ENCODE measurements at regions of chr7 and their contacts with region 1.

Region 1: DNA sequence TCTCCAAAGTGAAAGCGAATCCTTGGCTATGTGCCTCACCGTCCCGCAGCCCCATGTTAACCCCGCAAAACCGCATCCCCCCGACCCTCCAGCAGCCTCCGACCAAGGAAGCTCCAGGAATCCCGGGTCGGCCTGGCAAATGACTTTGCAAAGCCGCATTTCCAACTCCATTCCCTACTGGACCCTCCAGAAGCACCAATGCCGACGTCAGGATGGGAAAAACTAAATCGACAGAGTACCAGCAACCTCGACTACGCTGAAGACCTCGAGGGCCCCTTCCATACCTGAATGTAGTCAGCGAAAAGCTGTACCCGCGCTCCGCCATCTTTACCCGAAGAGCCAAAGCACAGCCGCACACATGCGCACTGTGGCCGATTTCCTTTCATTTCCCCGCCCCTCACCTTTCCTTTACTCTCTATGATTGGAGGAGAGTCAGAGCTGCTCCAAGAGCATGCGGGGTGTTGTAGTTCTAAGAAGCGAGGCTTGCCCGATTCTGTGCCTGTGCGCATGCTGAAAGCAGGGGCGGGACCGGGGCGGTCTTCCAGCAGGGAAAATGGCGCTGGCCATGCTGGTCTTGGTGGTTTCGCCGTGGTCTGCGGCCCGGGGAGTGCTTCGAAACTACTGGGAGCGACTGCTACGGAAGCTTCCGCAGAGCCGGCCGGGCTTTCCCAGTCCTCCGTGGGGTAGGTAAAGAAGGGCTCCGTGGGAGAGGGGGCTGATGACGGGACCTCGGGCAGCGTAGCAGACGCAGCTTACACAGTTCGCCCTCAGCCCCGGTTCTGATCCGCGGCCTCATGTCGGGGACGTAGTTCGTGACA is at the starts of genes MRPL32 and PSMA2:
- DNase-seq: peak; percentile 88 to 98 (median 91)
- ATAC-seq: peak; percentile 98
- H3K4me3 ChIP-seq: peak within 1 kb of the TSS; percentile 87
- H3K4me3 Mint-ChIP-seq: peak within 1 kb of the TSS; percentile 92
- H3K27ac ChIP-seq: peak within 1 kb of the TSS; percentile 74 to 87
- H3K27ac Mint-ChIP-seq: peak within 1 kb of the TSS; percentile 92
- H3K4me1 ChIP-seq: peaks cover 28% of the 10 kb centered on the region
- H3K4me1 Mint-ChIP-seq: peaks cover 79% of the 10 kb centered on the region
- H3K27me3 ChIP-seq: no peaks in the 10 kb centered on the region
- H3K27me3 Mint-ChIP-seq: no peaks in the 10 kb centered on the region
- CTCF ChIP-seq: no peak
- total RNA-seq, gene MRPL32: 57.1 to 60.7 TPM
- total RNA-seq, gene PSMA2: 38.8 to 41.0 TPM

Region 2: GRCh38 chr7:42886129-42886528 is 45.9 kb before region 1 on chr7:
- CTCF ChIA-PET with region 1: no interaction called
- POLR2A ChIA-PET with region 1: interaction called, 15 read pairs
- intact Hi-C with region 1: no loop called
- DNase-seq: no peak
- ATAC-seq: no peak
- H3K4me3 ChIP-seq: no peak overlapping the region
- H3K4me3 Mint-ChIP-seq: peak overlapping the region; percentile 35
- H3K27ac ChIP-seq: no peak overlapping the region
- H3K27ac Mint-ChIP-seq: peak overlapping the region; percentile 49
- H3K4me1 ChIP-seq: peaks cover 18% of the 10 kb centered on the region
- H3K4me1 Mint-ChIP-seq: peaks cover 27% of the 10 kb centered on the region
- H3K27me3 ChIP-seq: peaks cover 0 to 5% of the 10 kb centered on the region in 2 experiments
- H3K27me3 Mint-ChIP-seq: no peaks in the 10 kb centered on the region
- CTCF ChIP-seq: no peak

Measured in CD4-positive, alpha-beta T cell (primary cell).